Right ventricle myocardium inferior (tissue), 1 donor: ENCODE measurements at regions of chr6 and their contacts with region 1.

Region 1: DNA sequence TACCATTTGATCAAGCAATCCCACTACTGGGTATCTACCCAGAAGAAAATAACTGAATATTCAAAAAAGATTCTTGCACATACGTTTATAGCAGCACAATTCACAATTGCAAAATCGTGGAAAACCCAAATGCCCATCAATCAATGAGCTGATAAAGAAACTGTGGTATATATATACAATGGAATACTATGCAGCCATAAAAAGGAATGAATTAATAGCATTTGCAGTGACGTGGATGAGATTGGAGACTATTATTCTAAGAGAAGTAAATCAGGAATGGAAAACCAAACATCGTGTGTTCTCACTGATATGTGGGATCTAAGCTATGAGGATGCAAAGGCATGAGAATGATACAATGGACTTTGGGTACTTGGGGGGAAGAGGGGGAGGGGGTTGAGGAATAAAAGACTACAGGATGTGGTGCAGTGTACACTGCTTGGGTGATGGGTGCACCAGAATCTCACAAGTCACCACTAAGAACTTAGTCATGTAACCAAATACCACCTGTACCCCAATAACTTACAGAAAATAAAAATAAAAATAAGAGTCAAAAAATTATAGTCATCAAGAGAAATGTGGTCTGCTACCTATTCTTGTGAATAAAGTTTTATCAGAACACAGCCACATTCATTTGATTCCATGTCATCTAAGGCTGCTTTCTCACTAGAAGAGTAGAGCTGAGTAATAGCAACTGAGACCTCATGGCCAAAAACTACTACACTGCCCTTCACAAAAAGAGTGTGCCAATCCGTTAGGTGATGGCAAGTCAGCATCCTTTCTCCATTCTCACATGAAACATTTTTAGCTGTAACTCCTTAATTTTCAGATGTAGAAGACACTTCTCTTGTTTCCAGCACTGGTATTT is 8.7 kb upstream of the HUS1B start:
- DNase-seq: no peak
- ATAC-seq: no peak

Region 2: DNA sequence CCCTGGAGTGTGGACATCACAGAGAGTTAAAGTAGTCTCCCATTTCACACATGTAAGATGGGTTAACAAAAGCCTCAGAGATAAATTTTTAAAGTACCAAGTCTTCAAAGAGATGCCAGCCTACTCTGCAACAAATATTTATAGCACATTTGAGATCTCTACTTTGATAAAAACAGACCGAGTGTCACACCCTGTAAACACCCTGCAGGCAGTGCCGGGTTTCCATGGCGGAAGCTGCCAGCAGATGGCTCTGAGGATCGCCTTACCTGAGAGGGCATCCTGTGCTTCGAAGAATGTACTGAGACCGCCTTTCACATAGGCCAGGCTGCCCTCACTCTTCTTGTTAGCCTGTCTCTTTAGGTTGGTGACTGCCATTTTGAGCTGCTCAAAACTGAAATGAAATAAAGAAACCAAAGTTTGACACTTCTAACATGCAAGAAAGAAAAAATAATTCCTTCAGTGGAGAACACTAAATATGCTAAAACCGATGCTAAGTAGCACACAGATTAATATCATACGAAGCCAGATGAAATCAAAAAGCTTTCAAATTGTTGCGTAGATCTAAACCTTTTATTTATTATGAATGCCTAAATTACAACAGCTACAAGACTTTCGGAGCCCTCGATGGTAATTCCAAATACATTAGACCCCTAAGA is 48.1 kb before region 1 on chr6:
- intact Hi-C with region 1: no loop called
- DNase-seq: no peak
- ATAC-seq: no peak

Region 3: GRCh38 chr6:680666-681374 is 15.2 kb after region 1 on chr6:
- intact Hi-C with region 1: loop called (anchors 2 kb)
- DNase-seq: no peak
- ATAC-seq: no peak